BJ (cell line): ENCODE measurements at regions of chr12 and their contacts with region 1.

Region 1: GRCh38 chr12:51341259-51342007 is 5.0 kb downstream of the CELA1 start:
- DNase-seq: peak; percentile 28
- H3K4me3 ChIP-seq: no peak overlapping the region
- H3K27me3 ChIP-seq: no peaks in the 10 kb centered on the region
- CTCF ChIP-seq: peak; percentile 98

Region 2: GRCh38 chr12:51253276-51253675 is 88.2 kb before region 1 on chr12:
- CTCF ChIA-PET with region 1: interaction called, 11 read pairs
- POLR2A ChIA-PET with region 1: no interaction called
- DNase-seq: no peak
- H3K4me3 ChIP-seq: no peak overlapping the region
- H3K27me3 ChIP-seq: no peaks in the 10 kb centered on the region
- CTCF ChIP-seq: no peak

Region 3: DNA sequence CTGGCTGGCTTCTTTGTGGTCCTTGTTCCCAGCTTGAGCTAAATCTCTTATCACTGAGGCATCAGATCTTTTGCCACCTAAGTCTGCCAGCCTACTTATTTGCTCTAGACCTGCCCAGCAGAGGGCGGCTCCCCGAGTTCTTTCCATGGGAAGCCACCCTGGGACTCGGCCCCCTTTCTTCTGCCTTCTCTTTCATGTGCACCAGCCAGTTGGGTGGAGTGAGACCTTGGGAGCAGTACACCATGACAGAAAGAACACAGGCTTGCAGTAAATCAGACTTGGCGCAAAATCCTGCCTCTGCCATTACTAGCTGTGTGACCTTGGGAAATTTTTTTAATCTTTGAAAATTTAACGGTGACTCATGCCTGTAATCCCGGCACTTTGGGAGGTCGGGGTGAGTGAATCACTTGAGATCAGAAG is 78.7 kb before region 1 on chr12:
- CTCF ChIA-PET with region 1: interaction called, 18 read pairs
- POLR2A ChIA-PET with region 1: no interaction called
- DNase-seq: no peak
- H3K4me3 ChIP-seq: no peak overlapping the region
- H3K27me3 ChIP-seq: no peaks in the 10 kb centered on the region
- CTCF ChIP-seq: peak; percentile 58

Region 4: GRCh38 chr12:51270067-51270970 is 71.1 kb before region 1 on chr12 and contains the start of gene SMAGP:
- CTCF ChIA-PET with region 1: interaction called, 35 read pairs
- POLR2A ChIA-PET with region 1: no interaction called
- DNase-seq: no peak
- H3K4me3 ChIP-seq: peak within 1 kb of the TSS; percentile 46
- H3K27me3 ChIP-seq: no peaks in the 10 kb centered on the region
- CTCF ChIP-seq: no peak
- polyA plus RNA-seq, gene SMAGP: 54.7 and 57.6 TPM in 2 replicates

Region 5: DNA sequence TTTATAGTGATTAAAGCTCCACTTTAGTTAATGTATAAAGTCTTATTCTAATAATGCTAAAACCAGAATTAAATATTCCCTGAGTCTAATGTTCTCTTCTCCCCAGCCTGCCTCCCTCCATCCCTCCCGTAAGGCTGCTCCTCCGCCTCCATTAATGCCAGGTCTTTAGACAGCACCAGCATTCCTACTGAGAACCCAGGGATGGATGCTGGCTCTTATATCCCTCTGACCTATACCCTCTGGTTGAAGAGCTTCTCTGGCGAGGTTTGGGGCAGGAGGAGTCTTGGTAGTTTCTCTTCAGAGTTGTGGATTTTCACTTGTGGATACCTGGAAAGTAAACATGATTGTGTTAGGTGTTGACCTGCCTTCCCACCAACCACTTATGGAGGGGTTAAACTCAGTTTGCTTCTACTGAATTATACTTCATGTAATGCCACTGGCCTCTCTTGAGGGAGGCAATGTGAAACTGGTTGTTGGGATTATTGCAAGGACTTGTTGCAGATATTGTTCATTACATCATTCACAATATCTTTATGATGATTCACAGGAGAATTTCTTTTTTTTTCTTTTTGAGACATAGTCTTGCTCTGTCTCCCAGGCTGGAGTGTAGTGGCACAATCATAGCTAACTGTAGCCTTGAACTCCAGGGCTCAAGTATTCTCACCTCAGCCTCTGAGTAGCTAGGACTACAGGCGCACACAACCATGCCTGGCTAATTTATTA is 60.1 kb before region 1 on chr12:
- CTCF ChIA-PET with region 1: interaction called, 10 read pairs
- POLR2A ChIA-PET with region 1: no interaction called
- DNase-seq: peak; percentile 23
- H3K4me3 ChIP-seq: no peak overlapping the region
- H3K27me3 ChIP-seq: no peaks in the 10 kb centered on the region
- CTCF ChIP-seq: no peak

Region 6: GRCh38 chr12:51326762-51327439 is 14.5 kb before region 1 on chr12:
- CTCF ChIA-PET with region 1: interaction called, 25 read pairs
- POLR2A ChIA-PET with region 1: interaction called, 3 read pairs
- DNase-seq: peak; percentile 26
- H3K4me3 ChIP-seq: no peak overlapping the region
- H3K27me3 ChIP-seq: no peaks in the 10 kb centered on the region
- CTCF ChIP-seq: no peak

Region 7: DNA sequence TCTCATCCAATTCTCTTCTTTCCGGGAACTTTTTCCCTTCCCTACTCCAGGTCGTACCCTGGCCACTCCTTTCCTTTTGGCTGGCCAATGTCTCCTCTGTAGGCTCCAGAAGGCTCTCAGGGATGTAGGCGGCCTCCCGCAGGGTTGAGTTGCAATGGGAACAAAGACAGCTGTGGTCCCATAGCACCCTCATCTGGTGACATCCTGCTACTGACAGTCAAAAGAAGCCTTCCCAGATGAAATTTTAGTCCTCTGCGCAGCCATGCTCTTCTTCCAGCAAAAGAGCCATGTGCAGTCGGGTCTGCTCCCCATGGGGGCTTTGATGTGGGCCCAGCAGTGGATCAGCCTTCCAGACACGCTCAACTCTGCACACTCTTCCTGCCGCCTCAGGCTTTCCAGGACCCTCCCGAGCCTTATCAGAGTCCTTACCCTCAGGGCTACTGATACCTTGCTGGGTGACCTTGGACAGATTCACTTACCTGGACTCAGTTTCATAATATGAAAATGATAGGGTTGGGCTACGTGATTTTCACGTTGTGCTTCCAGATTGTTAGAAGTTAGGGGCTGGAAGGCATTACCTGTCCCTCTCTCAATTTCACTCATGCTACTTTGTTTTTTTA is 10.6 kb after region 1 on chr12:
- CTCF ChIA-PET with region 1: interaction called, 19 read pairs
- POLR2A ChIA-PET with region 1: no interaction called
- DNase-seq: no peak
- H3K4me3 ChIP-seq: no peak overlapping the region
- H3K27me3 ChIP-seq: no peaks in the 10 kb centered on the region
- CTCF ChIP-seq: peak; percentile 67